Heart left ventricle (tissue), 16 donors: ENCODE measurements at regions of chr6 and their contacts with region 1.

Region 1: DNA sequence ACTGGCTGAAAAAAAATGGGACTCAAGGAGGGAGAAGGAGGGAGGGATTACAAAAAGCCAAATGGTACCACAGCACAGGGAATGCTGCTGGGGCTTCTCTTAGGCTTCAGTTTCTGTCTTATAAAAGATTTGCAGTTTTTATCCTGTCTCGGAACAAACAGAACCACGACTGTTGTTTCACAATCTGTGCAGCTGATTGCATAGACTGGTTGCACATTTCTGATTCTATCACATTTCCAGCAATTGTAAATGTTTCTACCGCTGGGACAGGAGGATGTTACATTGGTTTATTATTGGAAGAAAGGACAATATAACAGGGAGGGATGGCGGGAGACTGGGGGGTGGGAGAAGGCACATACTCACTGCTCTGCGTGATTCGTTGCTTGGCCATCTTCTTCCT is 73.5 kb upstream of the ARID1B start:
- DNase-seq: no peak
- ATAC-seq: no peak
- H3K4me3 ChIP-seq: no peak overlapping the region
- H3K27ac ChIP-seq: peak overlapping the region in 3 of 12 donors; percentile 13 to 39 (median 28)
- H3K4me1 ChIP-seq: peaks cover 0 to 3% (median 0%) of the 10 kb centered on the region in 12 donors
- H3K27me3 ChIP-seq: no peaks in the 10 kb centered on the region
- CTCF ChIP-seq: no peak
- POLR2A ChIP-seq: no peak

Region 2: DNA sequence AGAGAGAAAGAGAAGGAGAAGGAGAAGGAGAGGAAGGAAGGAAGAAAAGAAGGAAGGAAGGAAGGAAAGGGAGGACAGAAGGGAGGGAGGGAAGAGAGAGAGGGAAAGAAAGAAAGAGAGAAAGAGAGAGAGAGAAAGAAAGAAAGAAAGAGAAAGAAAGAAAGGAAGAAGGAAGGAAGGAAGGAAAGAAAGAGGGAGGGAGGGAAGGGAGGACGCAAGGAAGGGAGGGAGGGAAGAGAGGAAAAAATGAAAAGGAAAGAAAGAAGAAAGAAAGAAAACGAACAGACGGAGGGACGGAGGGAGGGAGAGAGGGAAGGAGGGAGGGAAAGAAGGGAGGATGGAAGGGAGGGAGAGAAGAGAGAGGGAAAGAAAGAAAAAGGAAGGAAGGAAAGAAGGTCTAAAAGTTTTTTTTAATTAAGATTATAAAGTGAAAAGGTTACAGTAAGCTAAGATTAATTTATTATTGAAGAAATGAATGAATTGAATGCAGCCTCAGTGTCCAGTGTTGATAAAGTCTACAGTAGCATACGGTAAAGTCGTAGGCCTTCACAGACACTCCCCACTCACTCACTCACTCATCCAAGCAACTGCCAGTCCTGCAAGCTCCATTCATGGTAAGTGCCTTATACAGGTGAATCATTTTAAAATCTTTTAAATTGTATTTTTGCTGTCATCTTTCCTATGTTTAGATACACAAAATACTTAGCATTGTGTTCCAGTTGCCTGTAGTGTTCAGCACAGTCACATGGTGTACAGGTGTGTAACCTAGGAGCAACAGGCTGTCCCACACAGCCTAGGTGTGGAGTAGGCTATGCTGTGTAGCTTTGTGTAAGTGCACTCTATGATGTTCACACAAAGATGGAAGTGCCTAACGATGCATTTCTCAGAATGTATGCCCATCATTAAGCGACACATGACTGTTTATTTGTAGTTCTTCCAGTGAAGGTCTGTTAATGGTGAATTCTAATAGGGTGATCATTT is 53.2 kb after region 1 on chr6:
- intact Hi-C with region 1: loop called in 1 of 10 experiments (anchors 5 kb)
- DNase-seq: no peak
- ATAC-seq: no peak
- H3K4me3 ChIP-seq: no peak overlapping the region
- H3K27ac ChIP-seq: no peak overlapping the region
- H3K4me1 ChIP-seq: peaks cover 0 to 6% (median 0%) of the 10 kb centered on the region in 12 donors
- H3K27me3 ChIP-seq: no peaks in the 10 kb centered on the region
- CTCF ChIP-seq: no peak
- POLR2A ChIP-seq: no peak